ENCODE measurements at regions of chr3 and their contacts with region 1.

Region 1: DNA sequence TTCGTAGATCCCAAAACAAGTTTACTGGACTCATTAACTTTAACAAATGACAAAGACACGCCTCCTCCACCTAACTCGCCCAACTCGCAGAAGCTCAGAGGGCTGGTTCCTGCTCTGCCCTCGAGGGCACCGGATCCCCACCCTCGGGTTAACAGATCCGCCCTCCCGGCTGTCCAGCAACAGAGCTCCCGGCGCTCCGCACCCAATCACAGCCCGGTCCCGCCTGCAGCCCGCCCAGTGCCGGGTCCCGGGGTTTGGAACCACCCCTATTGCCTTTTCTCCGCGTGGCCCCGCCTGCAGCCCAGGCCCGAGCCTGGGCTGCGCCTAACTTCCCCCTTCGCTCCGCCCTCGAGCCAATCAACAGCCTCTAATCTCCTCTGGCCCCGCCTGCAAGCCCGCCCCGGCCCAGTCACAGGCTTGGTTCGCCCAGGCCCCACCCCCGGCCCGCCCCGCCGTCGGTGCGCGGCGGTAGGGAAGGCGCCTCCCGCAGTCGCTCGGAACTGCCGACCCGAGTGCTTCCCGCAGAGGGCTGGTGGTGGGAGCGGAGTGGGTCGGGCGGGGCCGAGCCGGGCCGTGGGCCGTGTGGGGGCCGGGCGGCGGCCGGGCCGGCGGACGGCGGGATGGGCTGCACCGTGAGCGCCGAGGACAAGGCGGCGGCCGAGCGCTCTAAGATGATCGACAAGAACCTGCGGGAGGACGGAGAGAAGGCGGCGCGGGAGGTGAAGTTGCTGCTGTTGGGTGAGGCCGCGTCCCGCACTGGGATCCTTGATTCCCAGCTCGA is at the start of gene GNAI2:
- DNase-seq: peak; percentile 100
- H3K4me3 Mint-ChIP-seq: peak within 1 kb of the TSS; percentile 99
- H3K27ac Mint-ChIP-seq: peak within 1 kb of the TSS; percentile 94
- H3K4me1 Mint-ChIP-seq: peaks cover 31% of the 10 kb centered on the region
- H3K27me3 Mint-ChIP-seq: no peaks in the 10 kb centered on the region
- total RNA-seq, gene GNAI2: 225 and 232 TPM in 2 replicates

Region 2: DNA sequence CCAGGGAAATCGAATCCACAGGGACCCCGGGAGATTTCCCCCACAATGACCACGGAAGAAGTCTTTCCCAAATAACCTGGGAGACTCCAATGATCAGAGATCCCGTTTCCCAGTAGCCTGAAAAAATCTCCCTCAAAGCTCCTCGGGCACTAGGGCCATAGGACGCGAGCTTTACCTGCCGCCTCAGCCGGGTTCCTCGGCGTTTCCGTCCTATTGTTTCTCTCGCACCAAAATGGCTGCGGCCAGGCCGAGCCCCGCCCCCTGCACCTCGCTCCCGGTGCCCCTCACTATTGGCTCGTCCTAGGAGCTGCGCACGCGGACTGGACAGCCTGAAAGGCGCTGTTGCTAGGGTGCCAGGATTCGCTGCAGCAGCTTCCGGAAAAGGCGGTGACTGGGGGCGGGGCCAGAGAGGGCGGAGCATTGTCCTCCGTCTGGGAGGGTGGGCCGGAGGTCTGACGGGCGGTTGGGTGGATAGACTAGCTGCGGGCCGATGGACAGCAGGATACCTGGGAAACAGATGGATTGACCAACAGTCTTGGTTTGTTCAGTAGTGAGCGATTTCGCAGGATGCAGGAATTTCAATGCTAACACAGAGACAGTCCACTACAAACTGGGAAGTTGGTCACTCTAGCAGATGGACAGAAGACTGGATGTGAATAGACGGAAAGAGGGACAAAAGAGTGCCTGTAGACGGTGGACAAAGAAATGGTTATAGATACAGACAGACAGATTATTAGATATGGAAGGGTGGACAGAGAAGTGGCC is 1518.7 kb before region 1 on chr3 and contains the start of gene IP6K2:
- intact Hi-C with region 1: loop called (anchors 5 kb)
- DNase-seq: peak; percentile 100
- H3K4me3 Mint-ChIP-seq: peak within 1 kb of the TSS; percentile 98
- H3K27ac Mint-ChIP-seq: peak within 1 kb of the TSS; percentile 98
- H3K4me1 Mint-ChIP-seq: peaks cover 29% of the 10 kb centered on the region
- H3K27me3 Mint-ChIP-seq: peaks cover 22% of the 10 kb centered on the region
- total RNA-seq, gene IP6K2: 57.9 and 58.4 TPM in 2 replicates

Region 3: DNA sequence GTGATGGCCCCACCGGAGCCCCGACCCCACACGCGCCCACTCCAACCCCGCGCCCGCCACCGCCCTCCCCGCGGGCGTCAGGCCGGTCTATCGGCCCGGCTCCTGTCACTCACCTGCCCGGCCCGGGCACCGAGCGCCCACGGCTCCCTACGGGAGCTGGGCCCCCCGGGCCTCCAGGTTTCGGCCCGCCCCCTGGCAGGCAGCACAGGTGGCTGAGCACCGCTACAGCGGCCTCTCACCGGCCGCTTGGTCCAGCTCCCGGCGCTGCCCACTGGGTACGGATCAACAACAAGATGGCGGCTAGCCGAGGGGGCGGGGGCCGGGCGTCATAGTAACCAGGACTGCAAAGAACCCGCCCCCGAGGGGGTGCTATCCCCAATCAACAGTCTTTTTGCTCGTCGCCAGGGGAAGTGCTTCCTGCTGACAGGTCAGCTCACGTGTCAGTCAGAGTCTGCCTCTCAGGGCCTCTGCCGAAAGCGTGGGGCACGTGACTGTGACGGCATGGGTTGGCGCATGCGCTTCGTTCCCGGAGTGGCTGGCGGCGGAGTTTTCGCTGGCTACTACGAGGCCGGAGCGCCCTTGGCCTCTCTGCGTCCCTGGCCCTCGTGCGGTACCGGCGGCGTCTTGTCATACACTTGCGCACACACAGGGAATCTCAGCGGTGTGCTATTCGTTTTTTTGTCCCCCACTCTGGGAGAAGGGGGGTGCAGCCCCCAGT is 449.5 kb before region 1 on chr3 and contains the start of gene IP6K1:
- intact Hi-C with region 1: loop called (anchors 5 kb)
- DNase-seq: peak; percentile 100
- H3K4me3 Mint-ChIP-seq: peak within 1 kb of the TSS; percentile 93
- H3K27ac Mint-ChIP-seq: peak within 1 kb of the TSS; percentile 94
- H3K4me1 Mint-ChIP-seq: peaks cover 25% of the 10 kb centered on the region
- H3K27me3 Mint-ChIP-seq: peaks cover 5% of the 10 kb centered on the region
- total RNA-seq, gene IP6K1: 39.6 and 42.2 TPM in 2 replicates

Region 4: DNA sequence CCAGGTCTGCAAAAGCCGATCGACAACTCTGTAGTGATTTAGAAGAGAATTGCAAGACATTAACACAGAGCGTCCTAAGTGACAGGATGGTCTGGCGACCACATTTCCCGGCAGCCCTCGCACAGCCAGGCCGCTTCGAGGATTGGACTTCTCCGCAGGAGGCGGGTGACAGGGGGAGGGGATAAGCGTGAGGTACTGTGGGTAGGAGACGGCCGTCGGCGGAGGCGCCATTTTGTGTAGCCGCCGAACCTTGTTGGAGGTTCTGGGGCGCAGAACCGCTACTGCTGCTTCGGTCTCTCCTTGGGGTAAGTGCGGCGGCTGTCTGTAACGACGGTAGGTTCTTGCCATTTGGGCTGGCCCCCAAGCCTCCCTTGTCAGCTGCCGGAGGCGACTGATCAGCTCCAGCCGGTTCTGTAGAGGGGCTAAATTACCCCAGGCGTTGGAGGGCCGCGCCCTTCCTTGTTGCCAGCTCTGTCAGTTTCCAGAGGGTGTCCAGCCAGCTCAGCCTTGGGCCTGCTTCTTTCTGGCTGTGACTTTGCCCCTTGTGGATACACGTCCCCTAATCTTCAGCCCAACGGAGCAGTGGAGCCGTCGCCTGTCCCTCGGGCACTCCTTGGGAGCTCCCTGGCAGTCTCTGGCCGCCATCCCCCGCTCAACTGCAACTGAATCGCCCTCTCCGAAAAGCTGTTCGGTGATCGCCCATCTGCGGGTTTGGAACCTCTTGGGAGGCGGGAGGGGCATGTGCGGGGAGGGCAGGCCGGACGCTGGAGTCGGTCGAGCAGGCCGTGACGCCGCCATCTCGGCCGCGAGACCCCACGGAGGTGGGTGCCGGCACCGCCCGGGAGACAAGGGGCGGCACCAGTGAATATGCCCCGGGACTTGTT is 146.9 kb before region 1 on chr3 and contains the start of gene RBM5:
- intact Hi-C with region 1: loop called (anchors 2 kb)
- DNase-seq: peak; percentile 98
- H3K4me3 Mint-ChIP-seq: peak within 1 kb of the TSS; percentile 98
- H3K27ac Mint-ChIP-seq: peak within 1 kb of the TSS; percentile 97
- H3K4me1 Mint-ChIP-seq: peaks cover 21% of the 10 kb centered on the region
- H3K27me3 Mint-ChIP-seq: no peaks in the 10 kb centered on the region
- total RNA-seq, gene RBM5: 154 and 161 TPM in 2 replicates

Region 5: DNA sequence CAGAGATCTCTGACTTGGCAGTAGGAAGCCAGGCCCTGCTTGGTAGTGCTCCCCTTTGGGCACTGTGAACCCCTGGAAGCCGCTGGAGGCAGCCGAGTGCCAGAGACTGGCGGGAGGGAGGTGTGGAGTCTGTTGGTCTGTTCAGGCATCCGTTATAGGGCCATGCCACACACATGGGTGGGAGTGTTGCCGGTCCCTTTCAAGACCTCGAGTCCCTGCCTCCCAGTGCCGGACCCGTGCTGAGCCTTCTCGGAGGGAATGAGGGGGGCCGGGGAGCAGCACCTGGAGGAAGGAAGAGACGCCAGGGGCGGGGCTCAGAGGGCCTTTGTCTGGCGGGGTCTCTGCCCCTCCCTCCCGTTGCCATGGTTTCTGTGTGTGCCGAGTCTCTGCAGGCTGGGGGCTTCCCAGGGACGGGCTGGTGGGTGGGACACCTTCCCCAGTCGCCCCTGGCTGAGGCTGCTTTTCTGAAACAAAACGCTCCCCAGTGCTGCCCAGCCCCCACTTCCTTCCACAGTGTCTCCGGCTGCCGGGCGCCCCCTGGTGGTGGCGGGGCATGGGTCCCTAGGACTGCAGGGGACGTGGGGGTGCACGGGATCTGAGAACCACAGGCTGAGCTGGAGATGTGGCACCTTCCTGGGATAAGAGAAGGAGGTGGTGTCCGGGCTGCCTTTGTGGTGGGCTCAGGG is 10.1 kb after region 1 on chr3:
- intact Hi-C with region 1: loop called (anchors 1 kb)
- DNase-seq: peak; percentile 98
- H3K4me3 Mint-ChIP-seq: peak overlapping the region; percentile 86
- H3K27ac Mint-ChIP-seq: peak overlapping the region; percentile 92
- H3K4me1 Mint-ChIP-seq: peaks cover 57% of the 10 kb centered on the region
- H3K27me3 Mint-ChIP-seq: no peaks in the 10 kb centered on the region

Region 6: DNA sequence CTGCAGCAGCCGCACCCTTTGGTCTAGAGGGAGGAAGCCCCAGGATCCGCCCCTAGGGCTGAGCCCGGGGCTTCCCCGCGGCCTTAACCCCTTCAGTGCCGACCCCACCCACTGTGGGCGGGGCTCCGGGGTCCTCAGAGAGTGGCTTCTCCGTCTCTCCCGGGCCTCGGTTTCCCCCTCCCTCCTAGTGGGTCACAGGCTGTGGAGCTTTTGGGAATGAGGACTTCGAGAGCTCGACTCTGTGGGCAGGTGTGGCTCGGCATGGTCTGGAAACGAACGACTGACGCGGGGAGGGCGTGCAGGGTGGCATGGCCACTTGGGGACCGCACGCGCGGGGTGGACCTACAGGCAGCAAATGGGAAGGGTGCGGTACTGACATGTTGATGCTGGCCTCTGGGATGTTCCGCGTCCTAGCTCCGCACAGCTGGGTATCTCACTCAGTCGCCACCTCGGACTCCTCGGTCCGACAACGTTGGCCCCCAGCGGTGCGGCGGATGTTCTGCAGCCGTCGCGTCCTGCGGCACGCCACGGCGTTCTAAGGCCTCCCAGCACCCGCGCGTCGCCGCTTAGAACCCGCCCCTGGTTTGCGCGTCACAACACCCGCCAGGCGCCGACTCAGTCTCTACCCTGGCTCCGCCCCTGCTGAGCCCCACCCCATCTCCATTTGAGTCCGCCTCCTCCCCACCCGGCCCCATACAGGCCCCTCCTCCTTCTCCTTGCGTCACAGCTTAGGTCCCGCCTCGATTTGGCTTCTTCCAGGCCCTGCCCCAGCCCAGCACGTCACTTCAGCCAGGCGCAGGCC is 63.1 kb after region 1 on chr3 and contains the starts of genes HYAL3 and NAA80:
- intact Hi-C with region 1: loop called (anchors 1 kb)
- DNase-seq: peak; percentile 100
- H3K4me3 Mint-ChIP-seq: peak within 1 kb of the TSS; percentile 99
- H3K27ac Mint-ChIP-seq: peak within 1 kb of the TSS; percentile 98
- H3K4me1 Mint-ChIP-seq: peaks cover 22% of the 10 kb centered on the region
- H3K27me3 Mint-ChIP-seq: no peaks in the 10 kb centered on the region
- total RNA-seq, gene HYAL3: 7.1 and 7.3 TPM in 2 replicates
- total RNA-seq, gene NAA80: 17.3 and 20.0 TPM in 2 replicates

Region 7: DNA sequence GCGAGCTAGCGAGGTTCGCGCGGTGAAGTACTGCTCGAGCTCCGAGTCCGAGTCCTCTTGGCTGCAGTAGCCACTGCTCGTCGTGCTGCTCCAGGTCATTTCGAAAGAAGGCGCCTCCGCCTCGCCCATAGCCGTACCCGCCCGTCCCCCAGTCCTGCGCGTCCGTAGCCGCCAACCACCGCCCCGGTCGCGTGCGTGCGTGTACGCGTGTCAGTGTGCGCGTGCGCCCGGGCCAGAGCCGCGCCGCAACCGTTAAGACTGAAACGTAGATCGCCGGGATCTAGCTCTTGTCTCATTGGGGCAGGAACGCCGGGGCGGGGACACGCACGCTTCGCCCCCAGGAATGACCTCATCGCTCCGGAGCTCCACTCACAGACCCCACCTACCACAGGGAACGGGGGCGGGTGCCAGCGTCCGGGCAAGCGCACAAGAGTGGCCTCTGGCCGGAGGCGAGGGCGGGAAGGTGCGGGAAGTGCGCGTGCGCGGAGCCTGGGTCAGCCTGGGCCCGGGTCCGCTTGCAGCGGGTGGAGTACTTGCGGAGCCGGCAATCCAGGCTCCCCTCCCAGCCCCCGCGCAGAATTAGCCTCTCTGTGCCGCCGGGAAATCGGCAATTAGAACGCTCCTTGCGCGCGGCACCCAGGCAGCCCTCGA is 101.4 kb after region 1 on chr3:
- intact Hi-C with region 1: loop called (anchors 5 kb)
- DNase-seq: peak; percentile 99
- H3K4me3 Mint-ChIP-seq: peak overlapping the region; percentile 85
- H3K27ac Mint-ChIP-seq: peak overlapping the region; percentile 99
- H3K4me1 Mint-ChIP-seq: peaks cover 54% of the 10 kb centered on the region
- H3K27me3 Mint-ChIP-seq: no peaks in the 10 kb centered on the region